Dorsolateral prefrontal cortex (tissue), 120 donors: ENCODE measurements at regions of chr5 and their contacts with region 1.

Region 1: GRCh38 chr5:131634996-131635754 is at the start of gene RAPGEF6:
- DNase-seq: peak; percentile 94 to 99 (median 97)
- H3K4me3 ChIP-seq: peak within 1 kb of the TSS; percentile 54 to 99 (median 88)
- H3K27ac ChIP-seq: peak within 1 kb of the TSS; percentile 89 to 100 (median 98)
- H3K27me3 ChIP-seq: no peaks in the 10 kb centered on the region
- CTCF ChIP-seq: peak in 14 of 56 donors; percentile 4 to 30 (median 19)
- total RNA-seq, gene RAPGEF6: 43.8 to 127 (median 73.9) TPM

Region 2: GRCh38 chr5:131589510-131590348 is 45.4 kb before region 1 on chr5:
- intact Hi-C with region 1: loop called (anchors 1 to 5 kb)
- DNase-seq: no peak
- H3K4me3 ChIP-seq: no peak overlapping the region
- H3K27ac ChIP-seq: peak overlapping the region in 46 of 59 donors; percentile 2 to 77 (median 48)
- H3K27me3 ChIP-seq: no peaks in the 10 kb centered on the region
- CTCF ChIP-seq: peak; percentile 68 to 97 (median 87)

Region 3: DNA sequence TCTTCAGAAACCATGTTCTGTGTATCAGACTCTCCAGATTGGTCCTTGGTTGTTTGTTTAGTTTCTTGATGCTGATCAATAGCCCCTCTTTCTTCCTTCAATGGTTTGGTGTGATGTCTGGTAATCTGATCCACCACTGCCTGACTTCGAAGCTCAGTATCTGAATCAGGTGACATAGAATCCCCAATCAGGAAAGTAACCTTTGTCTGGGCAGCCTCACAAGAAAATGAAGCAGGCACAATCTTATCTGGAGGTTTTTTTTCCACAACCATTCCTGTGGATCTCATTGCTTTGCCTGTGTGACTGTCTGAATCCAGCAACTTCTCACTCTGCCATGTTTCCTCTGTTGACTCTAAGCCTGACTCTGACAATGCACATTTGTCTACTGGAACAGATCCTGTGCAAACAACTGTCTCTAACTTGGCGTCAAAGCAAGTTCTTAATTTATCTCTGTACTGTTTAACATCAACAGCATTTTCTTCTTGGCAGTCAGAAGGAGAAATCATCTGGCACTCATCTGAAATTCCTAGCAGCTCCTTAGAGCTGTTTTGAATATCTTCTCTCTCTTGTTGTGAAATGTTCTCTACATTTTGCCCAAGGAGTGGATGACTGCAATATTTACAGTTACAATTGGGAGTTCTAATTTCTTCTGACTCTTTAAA is 37.0 kb after region 1 on chr5:
- intact Hi-C with region 1: loop called (anchors 1 to 5 kb)
- DNase-seq: peak in 1 of 10 donors; percentile 40
- H3K4me3 ChIP-seq: peak overlapping the region in 13 of 59 donors; percentile 4 to 34 (median 18)
- H3K27ac ChIP-seq: peak overlapping the region; percentile 61 to 96 (median 91)
- H3K27me3 ChIP-seq: no peaks in the 10 kb centered on the region
- CTCF ChIP-seq: peak in 1 of 56 donors; percentile 9